OCI-LY7 (cell line): ENCODE measurements at regions of chr17 and their contacts with region 1.

Region 1: GRCh38 chr17:38868817-38869525 is 887 bp upstream of the LASP1 start:
- DNase-seq: peak; percentile 90
- H3K4me3 ChIP-seq: peak overlapping the region; percentile 98
- H3K27ac ChIP-seq: peak overlapping the region; percentile 91
- H3K4me1 ChIP-seq: peaks cover 56% of the 10 kb centered on the region
- CTCF ChIP-seq: peak; percentile 84

Region 2: GRCh38 chr17:38752119-38752929 is 116.6 kb before region 1 on chr17 and contains the start of gene PSMB3:
- CTCF ChIA-PET with region 1: no interaction called
- POLR2A ChIA-PET with region 1: interaction called, 3 read pairs
- intact Hi-C with region 1: loop called (anchors 2 kb)
- DNase-seq: peak; percentile 100
- H3K4me3 ChIP-seq: peak within 1 kb of the TSS; percentile 79
- H3K27ac ChIP-seq: peak within 1 kb of the TSS; percentile 76
- H3K4me1 ChIP-seq: peaks cover 40% of the 10 kb centered on the region
- CTCF ChIP-seq: no peak
- total RNA-seq, gene PSMB3: 290 and 348 TPM in 2 replicates

Region 3: GRCh38 chr17:38824899-38825761 is 43.8 kb before region 1 on chr17 and contains the start of gene CWC25:
- CTCF ChIA-PET with region 1: no interaction called
- POLR2A ChIA-PET with region 1: interaction called, 6 read pairs
- intact Hi-C with region 1: loop called (anchors 1 kb)
- DNase-seq: peak; percentile 95
- H3K4me3 ChIP-seq: peak within 1 kb of the TSS; percentile 97
- H3K27ac ChIP-seq: peak within 1 kb of the TSS; percentile 72
- H3K4me1 ChIP-seq: peaks cover 17% of the 10 kb centered on the region
- CTCF ChIP-seq: no peak
- total RNA-seq, gene CWC25: 22.2 and 25.4 TPM in 2 replicates

Region 4: DNA sequence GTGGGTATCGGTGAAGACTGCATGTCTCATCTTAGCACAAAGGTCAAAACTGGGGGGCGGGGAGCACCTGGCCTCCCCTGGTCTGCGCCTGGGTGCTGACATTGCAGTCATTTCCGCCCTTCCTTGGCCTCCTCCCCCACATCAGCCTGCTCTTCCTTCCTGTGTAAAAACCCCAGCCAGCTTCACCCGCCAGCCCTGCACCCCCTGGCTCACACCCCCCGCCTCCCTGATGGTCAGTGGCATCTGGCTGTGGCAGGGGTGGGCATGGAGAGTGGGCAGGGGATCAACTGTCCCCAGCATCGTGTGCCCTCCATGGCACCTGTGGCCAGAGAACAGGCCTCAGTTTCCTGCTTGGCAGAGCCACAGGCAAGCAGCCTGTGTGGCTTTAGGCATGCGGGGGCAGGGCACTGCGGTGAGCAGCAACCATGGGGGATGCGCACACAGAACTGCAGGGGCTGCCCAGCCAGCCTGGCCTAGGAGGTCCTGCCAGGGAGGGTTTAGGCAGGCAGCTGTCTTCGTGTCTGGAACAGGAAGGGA is 29.9 kb after region 1 on chr17:
- CTCF ChIA-PET with region 1: interaction called, 3 read pairs
- POLR2A ChIA-PET with region 1: interaction called, 3 read pairs
- intact Hi-C with region 1: loop called (anchors 2 kb)
- DNase-seq: peak; percentile 88
- H3K4me3 ChIP-seq: peak overlapping the region; percentile 41
- H3K27ac ChIP-seq: peak overlapping the region; percentile 83
- H3K4me1 ChIP-seq: peaks cover 33% of the 10 kb centered on the region
- CTCF ChIP-seq: no peak

Region 5: DNA sequence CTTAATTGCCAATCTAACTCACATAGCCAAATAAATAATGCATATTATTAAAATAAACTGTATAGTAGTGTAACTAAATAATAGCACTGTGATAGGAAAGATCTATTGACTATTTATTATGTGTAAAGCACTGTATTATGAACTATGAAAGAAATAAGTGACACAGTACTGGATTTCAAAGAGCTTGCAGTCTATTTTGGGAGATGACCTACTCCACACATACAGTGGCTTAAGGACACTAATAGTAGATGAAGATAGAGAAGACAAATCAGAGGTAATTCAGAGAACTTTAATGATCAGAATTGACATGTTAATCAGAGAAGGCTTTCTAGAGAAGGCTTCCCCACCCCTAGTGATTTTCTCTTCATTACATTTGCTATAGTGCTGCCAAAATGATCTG is 71.0 kb after region 1 on chr17:
- CTCF ChIA-PET with region 1: no interaction called
- POLR2A ChIA-PET with region 1: interaction called, 4 read pairs
- intact Hi-C with region 1: loop called (anchors 10 kb)
- DNase-seq: no peak
- H3K4me3 ChIP-seq: no peak overlapping the region
- H3K27ac ChIP-seq: no peak overlapping the region
- H3K4me1 ChIP-seq: no peaks in the 10 kb centered on the region
- CTCF ChIP-seq: no peak

Region 6: GRCh38 chr17:39153599-39154051 is 284.7 kb after region 1 on chr17:
- CTCF ChIA-PET with region 1: interaction called, 3 read pairs
- POLR2A ChIA-PET with region 1: interaction called, 3 read pairs
- intact Hi-C with region 1: loop called (anchors 1 kb)
- DNase-seq: peak; percentile 85
- H3K4me3 ChIP-seq: peak overlapping the region; percentile 76
- H3K27ac ChIP-seq: peak overlapping the region; percentile 65
- H3K4me1 ChIP-seq: peaks cover 11% of the 10 kb centered on the region
- CTCF ChIP-seq: no peak